ENCODE measurements at regions of chr16 and their contacts with region 1.

Region 1: GRCh38 chr16:12062343-12063005 is 85.9 kb downstream of the SNX29 start:
- DNase-seq: peak; percentile 74
- ATAC-seq: peak; percentile 95
- H3K4me3 ChIP-seq: no peak overlapping the region
- H3K27ac ChIP-seq: peak overlapping the region; percentile 54
- H3K4me1 ChIP-seq: peaks cover 12% of the 10 kb centered on the region
- H3K27me3 ChIP-seq: no peaks in the 10 kb centered on the region
- CTCF ChIP-seq: no peak

Region 2: GRCh38 chr16:12026741-12027490 is 35.6 kb before region 1 on chr16:
- CTCF ChIA-PET with region 1: no interaction called
- POLR2A ChIA-PET with region 1: no interaction called
- intact Hi-C with region 1: loop called (anchors 5 kb)
- DNase-seq: peak; percentile 81
- ATAC-seq: peak; percentile 61
- H3K4me3 ChIP-seq: peak overlapping the region; percentile 63
- H3K27ac ChIP-seq: peak overlapping the region; percentile 83
- H3K4me1 ChIP-seq: peaks cover 37% of the 10 kb centered on the region
- H3K27me3 ChIP-seq: no peaks in the 10 kb centered on the region
- CTCF ChIP-seq: no peak

Region 3: GRCh38 chr16:12132290-12132689 is 69.8 kb after region 1 on chr16:
- CTCF ChIA-PET with region 1: no interaction called
- POLR2A ChIA-PET with region 1: no interaction called
- intact Hi-C with region 1: no loop called
- DNase-seq: no peak
- ATAC-seq: no peak
- H3K4me3 ChIP-seq: no peak overlapping the region
- H3K27ac ChIP-seq: no peak overlapping the region
- H3K4me1 ChIP-seq: no peaks in the 10 kb centered on the region
- H3K27me3 ChIP-seq: no peaks in the 10 kb centered on the region
- CTCF ChIP-seq: no peak

Measured in PC-3 (cell line).